Activated naive CD4-positive, alpha-beta T cell treated with anti-CD3 and anti-CD28 coated beads for 36 hours (primary cell): ENCODE measurements at regions of chr5 and their contacts with region 1.

Region 1: GRCh38 chr5:172833686-172834414 is at the start of gene ERGIC1:
- DNase-seq: peak; percentile 74
- H3K4me3 Mint-ChIP-seq: peak within 1 kb of the TSS; percentile 80
- H3K27ac Mint-ChIP-seq: peak within 1 kb of the TSS; percentile 71
- H3K4me1 Mint-ChIP-seq: peaks cover 41% of the 10 kb centered on the region
- H3K27me3 Mint-ChIP-seq: no peaks in the 10 kb centered on the region
- total RNA-seq, gene ERGIC1: 33.4 to 36.2 TPM

Region 2: GRCh38 chr5:172777881-172778814 is 55.7 kb before region 1 on chr5:
- CTCF ChIA-PET with region 1: no interaction called
- intact Hi-C with region 1: loop called (anchors 1 kb)
- DNase-seq: no peak
- H3K4me3 Mint-ChIP-seq: no peak overlapping the region
- H3K27ac Mint-ChIP-seq: peak overlapping the region; percentile 77
- H3K4me1 Mint-ChIP-seq: peaks cover 55% of the 10 kb centered on the region
- H3K27me3 Mint-ChIP-seq: no peaks in the 10 kb centered on the region

Region 3: DNA sequence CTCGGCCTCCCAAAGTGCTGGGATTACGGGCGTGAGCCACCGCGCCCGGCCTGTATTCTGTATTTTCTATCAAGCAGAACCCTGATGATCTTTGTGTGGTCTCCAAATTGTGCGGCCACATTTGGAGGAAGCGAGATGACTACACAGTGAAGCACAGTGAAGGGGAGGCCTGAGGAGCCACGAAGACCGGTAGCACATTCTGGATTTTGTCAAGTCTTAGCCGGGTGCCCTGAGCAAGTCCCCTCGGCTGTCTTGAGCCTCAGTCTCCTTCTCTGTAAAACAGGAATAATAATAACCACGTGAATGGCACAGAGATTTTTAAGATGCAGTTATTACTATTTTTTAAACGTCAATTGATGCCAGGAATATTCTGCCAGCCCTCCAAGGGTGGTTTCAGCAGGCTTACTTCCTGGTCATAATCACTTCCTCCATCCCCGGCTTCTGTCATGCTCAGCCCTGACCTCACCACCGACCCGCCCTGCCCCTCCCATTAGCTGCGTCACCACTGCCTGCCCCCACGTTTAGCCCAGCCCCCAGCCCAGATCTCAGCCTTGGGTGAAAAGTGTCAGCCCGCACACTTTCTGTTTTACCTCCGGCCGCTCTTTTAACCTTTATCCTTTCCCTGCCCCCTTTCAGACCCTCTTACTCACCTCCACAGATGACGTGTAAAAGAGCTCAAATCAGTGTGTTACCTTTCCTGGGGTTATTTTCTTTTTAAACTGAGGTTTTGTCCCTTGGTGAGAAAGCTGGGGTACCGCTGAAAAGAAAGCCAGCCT is 26.8 kb before region 1 on chr5:
- CTCF ChIA-PET with region 1: interaction called, 6 read pairs
- intact Hi-C with region 1: loop called (anchors 1 kb)
- DNase-seq: peak; percentile 98
- H3K4me3 Mint-ChIP-seq: peak overlapping the region; percentile 43
- H3K27ac Mint-ChIP-seq: peak overlapping the region; percentile 86
- H3K4me1 Mint-ChIP-seq: peaks cover 14% of the 10 kb centered on the region
- H3K27me3 Mint-ChIP-seq: no peaks in the 10 kb centered on the region

Region 4: DNA sequence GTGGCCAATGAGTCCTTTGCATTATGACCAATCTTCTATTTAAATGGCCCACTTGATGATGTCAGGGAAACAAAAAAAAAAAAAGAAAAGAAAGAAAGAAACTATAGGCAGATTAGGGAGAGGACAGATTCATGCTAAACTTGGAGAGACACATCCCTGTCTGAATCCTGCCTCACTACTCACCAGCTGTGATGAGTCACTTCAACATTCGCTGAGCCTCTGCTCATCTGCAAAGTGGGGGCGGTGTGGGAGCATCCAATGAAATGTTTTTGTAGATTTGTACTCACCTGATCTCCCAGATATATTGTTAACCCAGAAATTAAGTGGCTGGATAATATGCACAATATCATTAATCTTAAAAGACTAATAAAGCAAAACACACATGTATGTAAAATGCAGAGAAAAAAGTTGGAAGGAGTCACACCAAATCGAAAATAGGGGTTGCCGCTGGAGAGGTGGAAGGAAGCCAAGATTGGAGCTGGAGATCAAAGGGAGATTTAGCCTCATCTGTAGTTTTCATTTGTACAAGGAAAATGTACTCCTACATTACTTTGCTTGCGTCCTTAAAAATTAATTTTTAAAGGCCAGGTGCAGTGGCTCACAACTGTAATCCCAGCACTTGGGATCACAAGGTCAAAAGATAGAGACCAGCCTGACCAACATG is 16.8 kb before region 1 on chr5:
- CTCF ChIA-PET with region 1: no interaction called
- intact Hi-C with region 1: loop called (anchors 2 kb)
- DNase-seq: peak; percentile 49
- H3K4me3 Mint-ChIP-seq: no peak overlapping the region
- H3K27ac Mint-ChIP-seq: no peak overlapping the region
- H3K4me1 Mint-ChIP-seq: peaks cover 12% of the 10 kb centered on the region
- H3K27me3 Mint-ChIP-seq: no peaks in the 10 kb centered on the region

Region 5: DNA sequence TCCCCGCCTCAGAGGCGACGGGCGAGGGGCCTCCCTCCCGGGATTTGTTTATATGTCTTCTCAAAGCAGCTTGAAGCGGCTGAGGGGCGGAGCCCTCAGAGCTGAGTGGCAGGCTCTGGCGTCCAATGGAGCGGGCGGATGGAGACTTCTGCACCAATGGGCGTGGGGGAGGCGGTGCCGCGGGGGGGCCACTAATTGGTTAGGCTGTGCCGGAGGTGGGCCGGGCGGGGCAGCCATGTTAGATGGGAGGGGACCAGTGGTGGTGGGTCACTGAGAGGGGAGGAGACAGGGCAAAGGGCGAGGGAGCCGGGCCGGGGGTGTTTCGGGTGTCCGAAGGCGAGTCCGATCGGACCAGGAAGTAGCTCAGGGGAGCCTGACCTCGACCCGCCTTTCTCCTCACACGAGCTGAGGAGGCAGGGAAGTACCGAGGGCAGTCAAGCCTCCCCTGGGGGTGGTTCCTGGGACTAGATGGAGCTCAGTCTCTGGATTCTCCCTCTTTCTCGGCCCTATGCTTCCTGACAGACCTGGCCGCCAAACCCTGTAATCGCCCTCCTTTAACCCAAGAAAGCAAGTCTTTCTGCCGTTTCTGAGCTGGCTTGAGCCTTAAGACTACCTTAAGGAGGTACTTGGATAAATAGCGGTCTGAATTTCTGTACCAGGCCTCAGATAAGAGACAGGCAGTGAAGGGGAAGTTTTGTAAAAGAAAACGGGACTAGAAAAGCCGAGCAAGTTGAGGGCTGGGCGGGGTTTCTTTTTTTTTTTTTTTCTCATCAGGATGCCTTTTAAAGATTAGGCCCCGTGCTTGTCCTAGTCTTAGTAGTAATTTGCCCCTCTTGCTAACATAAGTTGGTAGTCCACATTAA is 223.4 kb after region 1 on chr5:
- CTCF ChIA-PET with region 1: no interaction called
- intact Hi-C with region 1: loop called (anchors 5 kb)
- DNase-seq: peak; percentile 100
- H3K4me3 Mint-ChIP-seq: peak overlapping the region; percentile 91
- H3K27ac Mint-ChIP-seq: peak overlapping the region; percentile 97
- H3K4me1 Mint-ChIP-seq: peaks cover 51% of the 10 kb centered on the region
- H3K27me3 Mint-ChIP-seq: no peaks in the 10 kb centered on the region